Esophagus muscularis mucosa (tissue), 4 donors: ENCODE measurements at regions of chr7 and their contacts with region 1.

Region 1: GRCh38 chr7:96436880-96437279 is 115.0 kb upstream of the SLC25A13 start:
- DNase-seq: no peak
- H3K4me3 ChIP-seq: no peak overlapping the region
- H3K27ac ChIP-seq: no peak overlapping the region
- H3K4me1 ChIP-seq: no peaks in the 10 kb centered on the region
- H3K27me3 ChIP-seq: no peaks in the 10 kb centered on the region
- CTCF ChIP-seq: no peak
- EP300 ChIP-seq: no peak
- POLR2A ChIP-seq: no peak

Region 2: GRCh38 chr7:95828824-95829790 is 607.8 kb before region 1 on chr7:
- intact Hi-C with region 1: no loop called
- DNase-seq: no peak
- H3K4me3 ChIP-seq: no peak overlapping the region
- H3K27ac ChIP-seq: no peak overlapping the region
- H3K4me1 ChIP-seq: no peaks in the 10 kb centered on the region
- H3K27me3 ChIP-seq: no peaks in the 10 kb centered on the region
- CTCF ChIP-seq: no peak
- EP300 ChIP-seq: no peak
- POLR2A ChIP-seq: no peak

Region 3: DNA sequence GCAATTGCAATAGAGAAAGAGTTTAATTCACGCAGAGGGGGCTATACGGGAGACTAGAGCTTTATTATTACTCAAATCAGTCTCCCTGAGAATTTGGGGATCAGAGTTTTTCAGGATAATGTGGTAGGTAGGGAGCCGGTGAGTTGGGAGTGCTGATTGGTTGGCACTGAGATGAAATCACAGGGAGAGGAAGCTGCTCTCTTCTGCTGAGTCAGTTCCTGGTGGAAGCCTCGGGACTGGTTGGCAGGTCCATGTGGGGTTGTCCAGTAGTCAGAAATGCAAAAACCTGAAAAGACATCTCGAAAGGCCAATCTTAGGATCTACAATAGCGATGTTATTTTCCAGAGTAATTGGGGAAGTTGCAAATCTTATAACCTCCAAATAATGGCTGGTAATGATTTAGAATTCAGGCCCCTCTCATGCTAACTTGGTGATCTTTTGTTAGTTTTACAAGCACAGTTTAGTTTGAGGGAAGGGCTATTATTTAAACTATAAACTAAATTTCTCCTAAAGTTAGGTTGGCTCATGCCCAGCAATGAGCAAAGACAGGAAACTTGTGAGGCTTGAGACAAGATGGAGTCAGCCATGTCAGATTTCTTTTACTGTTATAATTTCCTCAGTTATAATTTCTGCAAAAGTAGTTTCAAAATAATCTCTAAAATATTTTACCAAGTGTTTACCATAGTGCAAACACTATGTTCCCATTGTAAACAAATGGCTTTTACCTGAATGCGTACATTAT is 75.6 kb before region 1 on chr7:
- intact Hi-C with region 1: loop called (anchors 2 kb)
- DNase-seq: no peak
- H3K4me3 ChIP-seq: no peak overlapping the region
- H3K27ac ChIP-seq: no peak overlapping the region
- H3K4me1 ChIP-seq: no peaks in the 10 kb centered on the region
- H3K27me3 ChIP-seq: no peaks in the 10 kb centered on the region
- CTCF ChIP-seq: no peak
- EP300 ChIP-seq: no peak
- POLR2A ChIP-seq: no peak

Region 4: DNA sequence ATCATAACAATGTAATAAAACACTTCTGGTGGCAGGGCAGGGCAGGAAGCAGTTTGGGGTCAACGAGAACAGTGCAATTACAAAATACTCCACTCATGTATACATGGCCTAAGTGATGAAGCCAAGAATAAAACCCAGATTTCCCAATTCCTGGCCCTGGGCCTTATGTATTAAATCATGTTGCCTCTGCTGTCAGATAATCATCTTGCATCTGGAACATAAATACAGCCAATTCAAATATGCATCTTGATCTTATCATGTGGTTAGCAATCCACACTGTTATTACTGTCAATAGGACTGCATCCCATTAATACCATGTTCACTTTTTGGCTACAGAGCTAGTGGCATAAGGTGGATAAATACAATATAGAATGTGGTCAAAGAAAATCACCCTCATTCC is 71.5 kb after region 1 on chr7:
- intact Hi-C with region 1: no loop called
- DNase-seq: no peak
- H3K4me3 ChIP-seq: no peak overlapping the region
- H3K27ac ChIP-seq: no peak overlapping the region
- H3K4me1 ChIP-seq: no peaks in the 10 kb centered on the region
- H3K27me3 ChIP-seq: no peaks in the 10 kb centered on the region
- CTCF ChIP-seq: no peak
- EP300 ChIP-seq: no peak
- POLR2A ChIP-seq: no peak